Heart left ventricle (tissue), 16 donors: ENCODE measurements at regions of chr3 and their contacts with region 1.

Region 1: DNA sequence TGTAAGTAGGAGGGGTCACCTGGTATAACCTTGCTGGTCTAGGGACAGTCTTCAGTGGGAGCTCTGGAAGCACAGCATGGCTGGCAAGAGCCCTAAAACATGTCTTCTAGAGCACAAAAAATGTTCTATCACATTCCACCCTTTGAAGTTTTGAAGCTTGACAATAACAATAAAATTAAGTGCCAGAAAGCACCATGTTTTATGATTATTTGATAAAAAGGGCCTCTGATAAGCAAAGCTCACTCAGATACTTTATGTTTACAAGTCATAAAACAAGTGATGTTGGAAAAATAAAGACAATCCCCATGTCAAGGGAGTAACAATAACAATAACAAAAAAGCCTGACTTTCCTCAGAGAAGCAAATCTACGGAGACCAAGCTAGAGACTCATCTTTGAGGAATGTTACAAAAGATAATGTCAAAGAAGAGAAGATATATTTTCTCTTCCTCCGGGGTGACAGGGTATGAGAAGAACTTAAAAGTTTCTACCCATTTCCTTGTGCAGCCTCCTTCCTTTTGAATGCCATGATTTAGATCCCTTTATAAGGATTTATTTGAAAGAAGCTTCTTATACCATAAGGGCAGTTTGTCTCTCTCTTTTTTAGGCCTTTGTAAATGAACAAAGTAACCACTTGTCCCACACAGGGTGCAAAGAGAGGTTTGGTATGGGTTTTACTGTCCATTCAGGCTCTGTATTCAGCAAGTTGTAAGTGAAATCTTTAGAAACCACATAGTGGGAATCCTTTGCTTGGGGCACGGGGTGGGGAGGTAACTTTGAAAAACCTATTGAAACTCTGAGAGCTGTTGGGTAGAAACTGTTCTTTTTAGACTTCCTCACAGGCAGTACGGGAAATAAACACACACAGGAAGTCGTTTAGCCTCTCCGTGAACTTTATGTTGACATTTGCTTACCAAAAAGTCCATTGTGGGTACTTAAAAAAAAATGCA is 109.6 kb upstream of the RBMS3 start:
- DNase-seq: no peak
- ATAC-seq: peak; percentile 27 to 73 (median 65)
- H3K4me3 ChIP-seq: no peak overlapping the region
- H3K27ac ChIP-seq: peak overlapping the region; percentile 30 to 75 (median 60)
- H3K4me1 ChIP-seq: peaks cover 0 to 36% (median 10%) of the 10 kb centered on the region in 12 donors
- H3K27me3 ChIP-seq: no peaks in the 10 kb centered on the region
- CTCF ChIP-seq: no peak
- POLR2A ChIP-seq: no peak

Region 2: DNA sequence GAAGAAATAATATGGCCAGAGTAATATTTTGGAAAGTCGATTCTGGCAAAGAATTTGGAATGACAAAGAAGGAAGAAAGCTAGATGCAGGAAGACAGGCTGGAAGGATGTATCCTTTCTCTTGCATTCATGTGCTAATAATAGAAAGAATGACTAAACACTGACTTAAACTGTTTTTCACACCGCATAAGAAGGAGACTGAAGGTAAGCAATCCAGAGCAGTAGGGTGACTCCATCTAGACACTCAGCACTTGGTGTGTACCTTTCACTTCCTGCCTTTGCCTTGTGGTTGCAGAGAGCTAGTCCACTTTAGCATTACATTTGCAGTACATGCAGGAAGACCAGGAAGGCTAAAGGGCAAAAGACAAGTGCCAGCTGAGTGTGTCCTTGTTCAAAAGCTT is 344.1 kb after region 1 on chr3:
- intact Hi-C with region 1: loop called in 1 of 10 experiments (anchors 10 kb)
- DNase-seq: no peak
- ATAC-seq: peak in 2 of 4 donors; percentile 39 to 58
- H3K4me3 ChIP-seq: no peak overlapping the region
- H3K27ac ChIP-seq: no peak overlapping the region
- H3K4me1 ChIP-seq: peaks cover 10 to 70% (median 34%) of the 10 kb centered on the region in 12 donors
- H3K27me3 ChIP-seq: no peaks in the 10 kb centered on the region
- CTCF ChIP-seq: no peak
- POLR2A ChIP-seq: no peak

Region 3: DNA sequence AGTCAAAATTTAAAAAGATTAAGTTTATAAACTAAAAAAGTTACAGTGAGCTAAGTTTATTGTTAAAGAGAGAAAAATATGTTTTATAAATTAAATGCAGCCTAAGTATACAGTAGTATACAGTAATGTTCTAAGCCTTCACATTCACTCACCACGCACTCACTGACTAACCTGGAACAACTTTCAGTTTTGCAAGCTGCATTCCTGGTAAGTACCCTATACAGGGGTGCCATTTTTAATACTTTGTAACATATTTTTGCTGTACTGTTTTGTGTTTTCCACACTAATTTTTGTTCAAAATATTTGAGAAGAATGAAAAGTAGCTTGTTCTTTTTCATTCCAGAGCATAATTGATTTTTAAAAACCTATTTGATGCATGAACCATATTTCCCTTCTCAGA is 634.4 kb after region 1 on chr3:
- intact Hi-C with region 1: no loop called
- DNase-seq: no peak
- ATAC-seq: no peak
- H3K4me3 ChIP-seq: no peak overlapping the region
- H3K27ac ChIP-seq: no peak overlapping the region
- H3K4me1 ChIP-seq: peaks cover 0 to 11% (median 0%) of the 10 kb centered on the region in 12 donors
- H3K27me3 ChIP-seq: no peaks in the 10 kb centered on the region
- CTCF ChIP-seq: no peak
- POLR2A ChIP-seq: no peak